ENCODE measurements at regions of chr7 and their contacts with region 1.

Region 1: DNA sequence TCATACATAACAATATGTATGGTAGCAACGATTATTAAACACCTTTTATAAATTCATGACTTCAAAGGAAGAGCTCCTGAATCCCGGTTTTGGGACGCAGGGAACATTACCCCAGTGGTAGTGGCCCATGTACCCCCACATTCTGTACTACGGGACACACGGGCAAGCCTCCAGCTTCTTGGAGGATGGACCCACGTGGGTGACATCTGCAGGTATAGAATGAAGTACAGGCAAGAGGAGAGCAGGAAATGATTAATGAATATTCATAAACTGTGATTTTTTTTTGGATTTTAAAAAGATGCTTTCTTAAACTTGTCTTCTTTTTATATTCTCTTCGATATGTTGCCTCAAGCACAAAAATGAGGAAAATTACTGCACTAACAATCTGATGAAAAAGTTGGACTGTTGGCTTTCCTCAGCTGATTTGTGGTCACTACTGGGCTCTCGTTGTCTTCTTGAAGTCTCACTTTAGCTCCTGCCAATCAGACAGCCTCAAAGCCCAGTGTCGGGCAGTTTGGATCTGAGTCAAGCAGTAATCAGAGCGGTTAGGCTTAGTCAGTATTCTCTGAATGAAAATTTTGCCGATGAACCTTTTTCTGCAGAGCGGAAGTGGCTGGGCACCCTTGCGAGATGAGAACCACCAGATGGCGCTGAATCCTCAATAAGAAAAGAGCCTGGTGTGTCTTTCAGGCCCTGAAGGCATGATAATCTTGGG is 157.7 kb upstream of the CDCA7L start:
- DNase-seq: peak in 8 of 9 donors; percentile 22 to 62 (median 48)
- ATAC-seq: peak; percentile 83
- H3K4me3 ChIP-seq: no peak overlapping the region
- H3K4me3 Mint-ChIP-seq: peak overlapping the region in 1 of 10 donors; percentile 4
- H3K27ac ChIP-seq: no peak overlapping the region
- H3K27ac Mint-ChIP-seq: no peak overlapping the region
- H3K4me1 ChIP-seq: no peaks in the 10 kb centered on the region
- H3K4me1 Mint-ChIP-seq: peaks cover 0 to 4% (median 3%) of the 10 kb centered on the region in 7 donors
- H3K27me3 ChIP-seq: no peaks in the 10 kb centered on the region
- H3K27me3 Mint-ChIP-seq: peaks cover 4 to 18% (median 4%) of the 10 kb centered on the region in 5 donors

Region 2: DNA sequence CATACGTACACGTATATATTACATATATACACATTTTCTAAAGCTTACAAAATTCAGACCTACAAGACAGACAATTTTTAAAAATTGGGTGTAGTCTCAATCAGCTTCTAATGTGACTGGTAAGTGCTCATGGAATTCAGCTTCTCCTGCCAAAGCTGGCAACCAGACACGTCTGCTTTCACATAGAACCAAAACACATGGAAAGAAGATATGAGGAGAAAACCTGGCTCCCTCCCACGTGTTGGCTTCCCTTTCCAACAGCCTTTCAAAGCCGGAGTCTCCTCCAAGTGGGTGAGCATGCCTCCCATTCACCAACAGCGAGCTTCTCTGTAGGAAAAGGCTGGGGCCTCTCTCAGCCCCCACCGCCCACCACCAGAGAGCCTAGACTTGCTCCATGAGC is 191.1 kb before region 1 on chr7:
- CTCF ChIA-PET with region 1: no interaction called
- POLR2A ChIA-PET with region 1: no interaction called
- intact Hi-C with region 1: no loop called
- DNase-seq: no peak
- ATAC-seq: no peak
- H3K4me3 ChIP-seq: no peak overlapping the region
- H3K4me3 Mint-ChIP-seq: no peak overlapping the region
- H3K27ac ChIP-seq: no peak overlapping the region
- H3K27ac Mint-ChIP-seq: no peak overlapping the region
- H3K4me1 ChIP-seq: no peaks in the 10 kb centered on the region
- H3K4me1 Mint-ChIP-seq: peaks cover 0 to 6% (median 3%) of the 10 kb centered on the region in 7 donors
- H3K27me3 ChIP-seq: no peaks in the 10 kb centered on the region
- H3K27me3 Mint-ChIP-seq: no peaks in the 10 kb centered on the region

Region 3: DNA sequence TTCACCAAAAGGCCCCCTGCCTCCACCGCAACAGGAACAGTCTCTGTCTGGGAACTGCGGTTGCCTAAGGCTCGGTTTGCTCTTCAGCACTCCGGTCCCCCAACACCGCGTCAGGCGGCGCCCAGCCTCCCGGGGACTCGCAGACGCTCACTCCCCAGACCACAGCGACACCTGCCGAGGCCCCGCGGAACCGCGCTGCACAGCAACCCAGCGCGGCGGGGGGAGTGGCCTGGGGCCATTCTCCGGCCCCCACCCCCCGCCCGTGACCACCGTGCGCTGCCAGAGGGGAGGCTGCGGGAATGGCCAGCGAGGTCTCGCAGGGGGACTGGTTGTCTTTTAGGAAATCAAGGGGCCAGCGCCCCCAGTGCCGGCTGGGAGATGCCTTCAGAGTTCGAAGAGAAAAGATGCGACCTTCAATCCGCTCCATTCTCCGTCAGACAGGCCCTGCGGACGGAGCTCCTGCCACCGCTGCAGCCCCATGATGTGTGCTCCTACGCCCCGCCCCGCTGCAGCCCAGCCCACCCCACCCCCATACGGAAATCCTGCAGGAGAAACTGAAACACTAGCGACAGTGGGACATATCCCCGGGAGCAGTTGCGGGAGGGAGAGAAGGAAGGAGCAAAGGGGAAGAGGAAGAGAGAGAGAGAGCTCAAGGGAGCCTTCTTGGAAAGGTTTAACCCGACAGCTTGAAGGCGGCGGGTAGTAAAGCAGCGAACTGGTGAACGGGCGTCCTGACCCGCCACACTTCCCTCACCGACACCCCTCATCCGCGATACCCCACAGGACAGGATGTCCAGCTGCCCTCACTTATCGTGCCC is 20.3 kb before region 1 on chr7:
- CTCF ChIA-PET with region 1: no interaction called
- POLR2A ChIA-PET with region 1: no interaction called
- intact Hi-C with region 1: loop called in 1 of 2 experiments (anchors 1 kb)
- DNase-seq: peak; percentile 59 to 86 (median 73)
- ATAC-seq: peak; percentile 99
- H3K4me3 ChIP-seq: peak overlapping the region; percentile 54
- H3K4me3 Mint-ChIP-seq: peak overlapping the region; percentile 79 to 90 (median 86)
- H3K27ac ChIP-seq: peak overlapping the region; percentile 57
- H3K27ac Mint-ChIP-seq: peak overlapping the region in 7 of 9 donors; percentile 28 to 80 (median 62)
- H3K4me1 ChIP-seq: peaks cover 5 to 7% of the 10 kb centered on the region in 2 donors
- H3K4me1 Mint-ChIP-seq: peaks cover 6 to 18% (median 13%) of the 10 kb centered on the region in 7 donors
- H3K27me3 ChIP-seq: no peaks in the 10 kb centered on the region
- H3K27me3 Mint-ChIP-seq: peaks cover 17 to 50% (median 21%) of the 10 kb centered on the region in 5 donors

Region 4: DNA sequence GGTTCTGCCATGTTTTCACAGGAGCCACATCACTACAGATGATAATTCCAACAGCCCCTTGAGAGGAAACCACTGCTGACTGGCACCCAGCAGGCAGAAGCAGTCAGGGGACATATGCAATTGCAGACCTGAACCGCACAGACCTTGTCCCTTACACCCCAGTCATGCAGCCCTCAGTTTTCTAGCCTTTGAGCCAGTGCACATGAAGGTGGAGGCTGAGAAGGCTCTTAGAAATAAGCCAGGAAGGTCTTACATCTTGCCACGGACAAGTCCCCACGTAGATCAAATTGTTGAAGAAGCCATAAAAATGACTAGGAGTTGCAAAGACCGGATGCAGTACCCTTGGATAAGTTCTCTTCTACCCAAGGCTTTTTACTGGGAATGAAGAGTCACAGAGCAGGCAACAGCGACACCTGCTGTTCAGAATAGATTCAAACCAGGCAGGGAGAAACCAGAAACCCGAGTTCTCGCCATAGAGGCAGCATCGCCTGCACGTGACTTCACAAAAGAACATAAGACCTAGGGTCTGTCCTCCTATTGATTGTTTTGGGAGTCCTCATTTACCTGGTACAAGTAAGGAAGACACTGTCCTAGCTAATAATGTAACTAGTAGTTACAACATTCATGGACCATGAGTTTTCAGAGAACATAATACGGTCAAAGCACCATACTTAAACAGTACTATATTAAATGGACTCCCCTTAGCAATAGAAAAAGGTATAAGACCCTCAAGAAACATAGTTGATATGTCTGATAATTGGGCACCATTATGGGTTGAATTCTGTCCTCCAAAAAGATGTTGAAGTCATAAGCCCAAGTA is 385.4 kb after region 1 on chr7:
- CTCF ChIA-PET with region 1: no interaction called
- POLR2A ChIA-PET with region 1: no interaction called
- intact Hi-C with region 1: loop called (anchors 1 kb)
- DNase-seq: peak; percentile 26 to 67 (median 38)
- ATAC-seq: peak; percentile 85
- H3K4me3 ChIP-seq: no peak overlapping the region
- H3K4me3 Mint-ChIP-seq: no peak overlapping the region
- H3K27ac ChIP-seq: no peak overlapping the region
- H3K27ac Mint-ChIP-seq: no peak overlapping the region
- H3K4me1 ChIP-seq: no peaks in the 10 kb centered on the region
- H3K4me1 Mint-ChIP-seq: peaks cover 0 to 3% (median 0%) of the 10 kb centered on the region in 7 donors
- H3K27me3 ChIP-seq: no peaks in the 10 kb centered on the region
- H3K27me3 Mint-ChIP-seq: peaks cover 0 to 20% (median 9%) of the 10 kb centered on the region in 5 donors

Region 5: GRCh38 chr7:22499044-22499443 is 395.6 kb after region 1 on chr7:
- CTCF ChIA-PET with region 1: no interaction called
- POLR2A ChIA-PET with region 1: no interaction called
- intact Hi-C with region 1: loop called (anchors 1 to 2 kb)
- DNase-seq: no peak
- ATAC-seq: no peak
- H3K4me3 ChIP-seq: no peak overlapping the region
- H3K4me3 Mint-ChIP-seq: peak overlapping the region in 1 of 10 donors; percentile 69
- H3K27ac ChIP-seq: no peak overlapping the region
- H3K27ac Mint-ChIP-seq: no peak overlapping the region
- H3K4me1 ChIP-seq: no peaks in the 10 kb centered on the region
- H3K4me1 Mint-ChIP-seq: peaks cover 0 to 7% (median 4%) of the 10 kb centered on the region in 7 donors
- H3K27me3 ChIP-seq: no peaks in the 10 kb centered on the region
- H3K27me3 Mint-ChIP-seq: peaks cover 2 to 39% (median 24%) of the 10 kb centered on the region in 5 donors